WTC11 (cell line): ENCODE measurements at regions of chr19 and their contacts with region 1.

Region 1: GRCh38 chr19:14479975-14480699 is 5.0 kb upstream of the PTGER1 start:
- DNase-seq: peak; percentile 94
- ATAC-seq: peak; percentile 85
- H3K4me3 Mint-ChIP-seq: no peak overlapping the region
- H3K27ac Mint-ChIP-seq: no peak overlapping the region
- H3K4me1 Mint-ChIP-seq: peaks cover 11% of the 10 kb centered on the region
- H3K27me3 Mint-ChIP-seq: no peaks in the 10 kb centered on the region
- CTCF ChIP-seq: peak; percentile 98

Region 2: DNA sequence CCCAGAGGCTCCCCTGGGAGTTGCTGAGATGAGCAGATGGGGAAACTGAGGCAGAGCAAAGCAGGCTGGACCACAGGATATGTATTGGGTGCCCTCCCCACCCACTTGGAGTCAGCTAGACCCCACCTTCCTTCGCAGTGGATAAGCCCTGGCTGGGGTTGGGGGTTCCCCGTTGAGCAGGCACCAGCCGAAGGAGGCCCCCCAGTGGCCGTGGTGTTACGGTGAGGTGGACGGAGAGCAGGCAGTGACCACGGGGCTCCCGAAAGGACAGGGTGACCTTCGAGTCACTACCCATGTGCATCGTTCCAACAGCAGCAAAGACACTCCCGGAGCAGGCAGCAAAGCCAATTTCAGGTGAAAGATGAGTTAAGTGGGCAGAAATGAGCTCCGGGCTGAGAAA is 161.3 kb before region 1 on chr19:
- CTCF ChIA-PET with region 1: no interaction called
- POLR2A ChIA-PET with region 1: no interaction called
- DNase-seq: peak; percentile 72
- ATAC-seq: peak; percentile 89
- H3K4me3 Mint-ChIP-seq: no peak overlapping the region
- H3K27ac Mint-ChIP-seq: no peak overlapping the region; the same call in 1 of the 2 replicates
- H3K4me1 Mint-ChIP-seq: peaks cover 7% of the 10 kb centered on the region
- H3K27me3 Mint-ChIP-seq: peaks cover 16% of the 10 kb centered on the region
- CTCF ChIP-seq: no peak

Region 3: GRCh38 chr19:14366498-14366915 is 113.6 kb before region 1 on chr19:
- CTCF ChIA-PET with region 1: interaction called, 17 read pairs
- POLR2A ChIA-PET with region 1: interaction called, 5 read pairs
- DNase-seq: peak; percentile 89
- ATAC-seq: peak; percentile 65
- H3K4me3 Mint-ChIP-seq: no peak overlapping the region
- H3K27ac Mint-ChIP-seq: no peak overlapping the region
- H3K4me1 Mint-ChIP-seq: peaks cover 24% of the 10 kb centered on the region
- H3K27me3 Mint-ChIP-seq: no peaks in the 10 kb centered on the region; the same call in 1 of the 2 replicates
- CTCF ChIP-seq: no peak

Region 4: GRCh38 chr19:14432791-14433553 is 47.2 kb before region 1 on chr19 and contains the start of gene PKN1:
- CTCF ChIA-PET with region 1: interaction called, 48 read pairs
- POLR2A ChIA-PET with region 1: interaction called, 3 read pairs
- DNase-seq: peak; percentile 72
- ATAC-seq: peak; percentile 54
- H3K4me3 Mint-ChIP-seq: peak within 1 kb of the TSS; percentile 82
- H3K27ac Mint-ChIP-seq: peak within 1 kb of the TSS; percentile 72
- H3K4me1 Mint-ChIP-seq: peaks cover 7% of the 10 kb centered on the region
- H3K27me3 Mint-ChIP-seq: peaks cover 29% of the 10 kb centered on the region
- CTCF ChIP-seq: no peak
- total RNA-seq, gene PKN1: 170 to 197 TPM (median 187 TPM) in 3 replicates

Region 5: DNA sequence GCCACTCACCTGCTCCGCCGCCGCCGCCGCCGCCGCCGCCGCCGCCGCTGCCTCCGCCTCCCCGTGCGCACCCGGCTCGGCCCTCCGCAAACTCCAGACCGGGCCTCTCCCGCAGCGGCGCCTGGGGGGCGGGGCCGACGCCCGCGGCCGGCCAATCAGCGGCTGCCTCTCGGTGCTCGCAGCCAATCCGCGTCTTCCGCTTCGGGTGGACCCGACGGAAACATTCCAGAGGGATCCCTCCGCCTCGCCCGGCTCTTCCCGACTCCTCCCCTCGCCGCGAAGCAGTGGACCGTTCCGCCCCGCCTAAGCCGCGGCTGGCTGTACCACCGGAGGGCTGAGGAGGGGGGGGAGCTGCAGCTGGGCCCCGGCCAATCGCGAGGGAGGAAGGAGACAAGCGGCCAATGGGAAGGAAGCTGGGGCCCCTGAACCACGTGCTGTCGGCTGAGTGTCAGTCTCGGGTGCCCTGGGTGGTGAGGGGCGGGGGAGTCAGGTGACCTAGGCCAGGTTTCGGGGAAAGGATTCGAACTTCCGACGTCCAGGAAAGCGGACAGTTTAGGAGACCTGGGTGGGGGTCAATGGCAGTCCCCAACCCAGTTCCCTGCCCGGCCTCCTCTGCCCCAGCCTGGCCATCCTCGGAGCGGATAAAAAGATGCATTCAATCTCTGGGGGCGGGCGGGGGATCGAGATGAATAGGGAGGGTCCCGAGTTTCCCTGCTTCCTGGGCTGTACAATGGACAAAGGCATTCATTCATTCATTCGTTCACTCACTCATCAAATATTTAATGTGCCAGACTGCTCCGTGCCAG is 16.1 kb after region 1 on chr19 and contains the start of gene GIPC1:
- CTCF ChIA-PET with region 1: interaction called, 46 read pairs
- POLR2A ChIA-PET with region 1: interaction called, 6 read pairs
- DNase-seq: peak; percentile 99
- ATAC-seq: peak; percentile 96
- H3K4me3 Mint-ChIP-seq: peak within 1 kb of the TSS; percentile 89
- H3K27ac Mint-ChIP-seq: peak within 1 kb of the TSS; percentile 95
- H3K4me1 Mint-ChIP-seq: peaks cover 21% of the 10 kb centered on the region
- H3K27me3 Mint-ChIP-seq: peaks cover 4% of the 10 kb centered on the region; the same call in 1 of the 2 replicates
- CTCF ChIP-seq: no peak
- total RNA-seq, gene GIPC1: 70.7 to 76.5 TPM (median 75.0 TPM) in 3 replicates

Region 6: GRCh38 chr19:14517840-14518505 is 37.8 kb after region 1 on chr19 and contains the start of gene DNAJB1:
- CTCF ChIA-PET with region 1: interaction called, 29 read pairs
- POLR2A ChIA-PET with region 1: no interaction called
- DNase-seq: peak; percentile 58
- ATAC-seq: peak; percentile 77
- H3K4me3 Mint-ChIP-seq: peak within 1 kb of the TSS; percentile 92
- H3K27ac Mint-ChIP-seq: peak within 1 kb of the TSS; percentile 94
- H3K4me1 Mint-ChIP-seq: peaks cover 27% of the 10 kb centered on the region
- H3K27me3 Mint-ChIP-seq: no peaks in the 10 kb centered on the region
- CTCF ChIP-seq: no peak
- total RNA-seq, gene DNAJB1: 54.5 to 88.7 TPM (median 81.9 TPM) in 3 replicates

Region 7: GRCh38 chr19:14556662-14557188 is 76.6 kb after region 1 on chr19:
- CTCF ChIA-PET with region 1: interaction called, 14 read pairs
- POLR2A ChIA-PET with region 1: no interaction called
- DNase-seq: peak; percentile 90
- ATAC-seq: peak; percentile 75
- H3K4me3 Mint-ChIP-seq: no peak overlapping the region
- H3K27ac Mint-ChIP-seq: peak overlapping the region; percentile 65; the same call in 1 of the 2 replicates
- H3K4me1 Mint-ChIP-seq: peaks cover 31% of the 10 kb centered on the region
- H3K27me3 Mint-ChIP-seq: no peaks in the 10 kb centered on the region
- CTCF ChIP-seq: peak; percentile 94